CD8-positive, alpha-beta T cell (primary cell): ENCODE measurements at regions of chr14 and their contacts with region 1.

Region 1: DNA sequence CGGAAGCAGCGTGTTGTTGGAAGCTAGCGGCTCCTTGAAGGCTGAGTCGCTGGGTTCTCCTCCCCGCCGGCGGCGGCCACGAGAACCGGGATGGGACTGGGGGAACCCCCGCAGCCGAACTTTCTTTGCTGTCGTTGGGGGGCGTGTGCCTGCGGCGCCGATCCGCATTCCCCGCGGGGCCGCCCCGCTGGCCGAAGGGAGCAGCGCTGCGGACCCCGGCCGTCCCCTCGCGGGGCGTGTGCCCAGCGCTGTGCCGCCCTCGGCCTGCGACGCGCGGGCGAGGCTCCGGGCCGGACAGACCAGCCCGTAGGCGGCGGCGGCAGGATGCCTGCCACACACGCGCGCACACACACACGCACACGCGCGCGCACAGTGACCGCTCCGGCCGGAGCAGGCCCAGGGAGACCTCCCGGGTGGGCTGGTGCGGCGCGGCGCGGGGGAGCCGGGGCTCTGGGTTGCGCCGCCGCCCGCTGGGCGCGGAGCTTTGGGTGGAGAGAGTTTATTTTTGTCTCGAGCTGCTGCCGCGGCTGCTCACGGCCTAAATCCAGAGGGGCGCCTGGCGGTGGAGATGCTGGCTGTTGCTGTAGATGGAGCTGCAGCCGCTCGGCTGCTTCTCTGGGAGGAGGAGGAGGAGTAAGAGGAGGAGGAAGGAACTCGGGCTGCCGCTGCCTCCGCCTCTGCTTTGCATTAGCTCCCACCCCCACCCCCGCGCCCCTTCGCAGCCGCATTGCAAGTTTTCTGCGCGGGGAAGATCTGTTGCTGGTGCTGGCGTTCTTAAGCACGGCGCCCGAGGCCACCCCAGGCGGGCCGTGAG is at the start of gene SAMD4A:
- DNase-seq: peak; percentile 19 to 72 (median 57)
- ATAC-seq: peak; percentile 36
- H3K4me3 ChIP-seq: peak within 1 kb of the TSS; percentile 67 to 84
- H3K4me3 Mint-ChIP-seq: peak within 1 kb of the TSS; percentile 93
- H3K27ac ChIP-seq: peak within 1 kb of the TSS in 1 of 2 experiments; percentile 12
- H3K27ac Mint-ChIP-seq: peak within 1 kb of the TSS; percentile 83
- H3K4me1 ChIP-seq: peaks cover 15% of the 10 kb centered on the region
- H3K4me1 Mint-ChIP-seq: peaks cover 21% of the 10 kb centered on the region
- H3K27me3 ChIP-seq: peaks cover 0 to 3% of the 10 kb centered on the region in 2 experiments
- H3K27me3 Mint-ChIP-seq: peaks cover 15% of the 10 kb centered on the region
- CTCF ChIP-seq: no peak
- total RNA-seq, gene SAMD4A: 1.6 to 2.0 TPM

Region 2: GRCh38 chr14:54396493-54397335 is 169.9 kb before region 1 on chr14 and contains the start of gene CDKN3:
- CTCF ChIA-PET with region 1: no interaction called
- POLR2A ChIA-PET with region 1: no interaction called
- intact Hi-C with region 1: loop called (anchors 1 to 5 kb)
- DNase-seq: peak; percentile 94 to 98 (median 96)
- ATAC-seq: peak; percentile 95
- H3K4me3 ChIP-seq: peak within 1 kb of the TSS; percentile 80 to 96
- H3K4me3 Mint-ChIP-seq: peak within 1 kb of the TSS; percentile 86
- H3K27ac ChIP-seq: peak within 1 kb of the TSS; percentile 23 to 46
- H3K27ac Mint-ChIP-seq: peak within 1 kb of the TSS; percentile 47
- H3K4me1 ChIP-seq: peaks cover 4% of the 10 kb centered on the region
- H3K4me1 Mint-ChIP-seq: peaks cover 9% of the 10 kb centered on the region
- H3K27me3 ChIP-seq: no peaks in the 10 kb centered on the region
- H3K27me3 Mint-ChIP-seq: no peaks in the 10 kb centered on the region
- CTCF ChIP-seq: no peak
- total RNA-seq, gene CDKN3: 0.56 to 0.68 TPM

Region 3: DNA sequence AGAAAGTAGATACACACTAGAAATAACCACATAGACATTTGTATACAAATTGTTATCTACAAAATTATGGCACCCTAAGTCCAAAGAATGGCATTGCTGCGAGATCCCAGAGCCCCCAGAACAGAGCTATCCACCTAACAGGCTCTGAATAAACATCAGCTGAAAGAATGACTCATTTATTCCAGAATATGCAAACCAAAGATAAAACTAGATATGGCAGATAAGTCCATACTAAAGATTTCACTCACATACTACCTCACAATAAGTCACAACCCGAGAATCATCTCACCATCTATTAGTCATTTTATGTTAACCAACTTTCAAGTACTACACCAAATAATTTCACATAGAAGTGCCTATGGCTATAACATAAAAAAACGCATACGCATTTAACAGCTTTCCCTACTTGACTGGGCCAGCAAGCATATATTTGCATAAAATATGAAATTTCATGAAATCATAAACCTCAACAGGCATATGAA is 131.1 kb before region 1 on chr14:
- CTCF ChIA-PET with region 1: no interaction called
- POLR2A ChIA-PET with region 1: no interaction called
- intact Hi-C with region 1: no loop called
- DNase-seq: peak in 1 of 9 experiments; percentile 25
- ATAC-seq: peak; percentile 72
- H3K4me3 ChIP-seq: no peak overlapping the region
- H3K4me3 Mint-ChIP-seq: peak overlapping the region; percentile 16
- H3K27ac ChIP-seq: no peak overlapping the region
- H3K27ac Mint-ChIP-seq: no peak overlapping the region
- H3K4me1 ChIP-seq: peaks cover 12% of the 10 kb centered on the region
- H3K4me1 Mint-ChIP-seq: peaks cover 66% of the 10 kb centered on the region
- H3K27me3 ChIP-seq: no peaks in the 10 kb centered on the region
- H3K27me3 Mint-ChIP-seq: no peaks in the 10 kb centered on the region
- CTCF ChIP-seq: no peak

Region 4: GRCh38 chr14:54509546-54510501 is 56.8 kb before region 1 on chr14 and contains the start of gene CGRRF1:
- CTCF ChIA-PET with region 1: interaction called, 3 read pairs
- POLR2A ChIA-PET with region 1: interaction called, 3 read pairs
- intact Hi-C with region 1: loop called (anchors 1 to 5 kb)
- DNase-seq: peak; percentile 90 to 98 (median 96)
- ATAC-seq: peak; percentile 95
- H3K4me3 ChIP-seq: peak within 1 kb of the TSS; percentile 92 to 99
- H3K4me3 Mint-ChIP-seq: peak within 1 kb of the TSS; percentile 96
- H3K27ac ChIP-seq: peak within 1 kb of the TSS; percentile 73 to 92
- H3K27ac Mint-ChIP-seq: peak within 1 kb of the TSS; percentile 92
- H3K4me1 ChIP-seq: peaks cover 31% of the 10 kb centered on the region
- H3K4me1 Mint-ChIP-seq: peaks cover 51% of the 10 kb centered on the region
- H3K27me3 ChIP-seq: no peaks in the 10 kb centered on the region
- H3K27me3 Mint-ChIP-seq: peaks cover 4% of the 10 kb centered on the region
- CTCF ChIP-seq: peak; percentile 64
- total RNA-seq, gene CGRRF1: 59.6 to 59.9 TPM

Region 5: DNA sequence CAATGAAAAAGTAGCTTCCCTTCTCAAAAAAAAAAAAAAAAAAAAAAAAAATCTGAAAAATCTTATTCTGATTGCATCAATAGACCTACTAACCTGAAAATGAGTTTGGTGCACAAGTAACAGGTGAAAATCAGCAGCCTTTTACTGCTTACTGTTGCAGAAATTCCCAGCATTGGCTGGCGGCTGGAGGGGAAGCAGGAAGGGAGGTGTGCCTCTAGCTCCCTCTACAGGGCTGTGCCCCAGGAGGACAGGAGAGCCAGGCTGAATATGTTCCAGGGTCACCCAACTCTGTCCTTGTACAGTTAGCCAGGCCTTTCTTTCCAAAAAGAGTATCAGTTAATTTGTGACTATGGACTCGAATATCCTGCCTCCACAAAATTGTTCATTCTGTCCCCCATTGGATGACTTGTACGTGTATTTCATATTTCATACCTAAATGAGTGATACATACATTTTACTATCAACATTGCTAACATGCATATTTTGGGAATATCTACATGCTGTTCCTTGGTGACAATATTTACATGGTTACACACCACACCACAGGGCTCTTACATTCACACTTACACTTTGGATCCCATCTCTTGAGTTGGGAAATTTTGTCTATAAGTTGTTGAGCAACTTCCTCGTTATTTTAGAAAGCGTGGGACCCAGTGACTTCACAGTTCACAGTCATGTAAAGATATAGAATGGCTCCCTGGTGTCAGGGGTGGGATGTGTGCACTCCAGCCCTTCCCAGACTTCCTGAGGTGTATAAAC is 125.1 kb after region 1 on chr14:
- CTCF ChIA-PET with region 1: interaction called, 14 read pairs
- POLR2A ChIA-PET with region 1: no interaction called
- intact Hi-C with region 1: loop called (anchors 1 kb)
- DNase-seq: peak in 8 of 9 experiments; percentile 13 to 69 (median 42)
- ATAC-seq: no peak
- H3K4me3 ChIP-seq: no peak overlapping the region
- H3K4me3 Mint-ChIP-seq: no peak overlapping the region
- H3K27ac ChIP-seq: no peak overlapping the region
- H3K27ac Mint-ChIP-seq: no peak overlapping the region
- H3K4me1 ChIP-seq: no peaks in the 10 kb centered on the region
- H3K4me1 Mint-ChIP-seq: no peaks in the 10 kb centered on the region
- H3K27me3 ChIP-seq: no peaks in the 10 kb centered on the region
- H3K27me3 Mint-ChIP-seq: peaks cover 25% of the 10 kb centered on the region
- CTCF ChIP-seq: peak; percentile 57

Region 6: GRCh38 chr14:54805521-54806322 is 239.1 kb after region 1 on chr14:
- CTCF ChIA-PET with region 1: interaction called, 21 read pairs
- POLR2A ChIA-PET with region 1: no interaction called
- intact Hi-C with region 1: loop called (anchors 1 kb)
- DNase-seq: peak; percentile 36 to 82 (median 71)
- ATAC-seq: peak; percentile 82
- H3K4me3 ChIP-seq: no peak overlapping the region
- H3K4me3 Mint-ChIP-seq: no peak overlapping the region
- H3K27ac ChIP-seq: no peak overlapping the region
- H3K27ac Mint-ChIP-seq: no peak overlapping the region
- H3K4me1 ChIP-seq: no peaks in the 10 kb centered on the region
- H3K4me1 Mint-ChIP-seq: peaks cover 5% of the 10 kb centered on the region
- H3K27me3 ChIP-seq: no peaks in the 10 kb centered on the region
- H3K27me3 Mint-ChIP-seq: peaks cover 8% of the 10 kb centered on the region
- CTCF ChIP-seq: peak; percentile 76

Region 7: GRCh38 chr14:55026793-55027561 is 460.4 kb after region 1 on chr14 and contains the starts of genes SOCS4 and WDHD1:
- CTCF ChIA-PET with region 1: no interaction called
- POLR2A ChIA-PET with region 1: interaction called, 5 read pairs
- intact Hi-C with region 1: loop called (anchors 1 to 2 kb)
- DNase-seq: peak; percentile 87 to 97 (median 94)
- ATAC-seq: peak; percentile 86
- H3K4me3 ChIP-seq: peak within 1 kb of the TSS; percentile 71 to 91
- H3K4me3 Mint-ChIP-seq: peak within 1 kb of the TSS; percentile 95
- H3K27ac ChIP-seq: peak within 1 kb of the TSS; percentile 80 to 95
- H3K27ac Mint-ChIP-seq: peak within 1 kb of the TSS; percentile 95
- H3K4me1 ChIP-seq: peaks cover 37% of the 10 kb centered on the region
- H3K4me1 Mint-ChIP-seq: peaks cover 54% of the 10 kb centered on the region
- H3K27me3 ChIP-seq: no peaks in the 10 kb centered on the region
- H3K27me3 Mint-ChIP-seq: no peaks in the 10 kb centered on the region
- CTCF ChIP-seq: no peak
- total RNA-seq, gene SOCS4: 22.6 to 24.0 TPM
- total RNA-seq, gene WDHD1: 1.2 to 1.6 TPM